Activated B cell treated with CpG ODN at 0.5 μM for 24 hours (primary cell): ENCODE measurements at regions of chr1 and their contacts with region 1.

Region 1: DNA sequence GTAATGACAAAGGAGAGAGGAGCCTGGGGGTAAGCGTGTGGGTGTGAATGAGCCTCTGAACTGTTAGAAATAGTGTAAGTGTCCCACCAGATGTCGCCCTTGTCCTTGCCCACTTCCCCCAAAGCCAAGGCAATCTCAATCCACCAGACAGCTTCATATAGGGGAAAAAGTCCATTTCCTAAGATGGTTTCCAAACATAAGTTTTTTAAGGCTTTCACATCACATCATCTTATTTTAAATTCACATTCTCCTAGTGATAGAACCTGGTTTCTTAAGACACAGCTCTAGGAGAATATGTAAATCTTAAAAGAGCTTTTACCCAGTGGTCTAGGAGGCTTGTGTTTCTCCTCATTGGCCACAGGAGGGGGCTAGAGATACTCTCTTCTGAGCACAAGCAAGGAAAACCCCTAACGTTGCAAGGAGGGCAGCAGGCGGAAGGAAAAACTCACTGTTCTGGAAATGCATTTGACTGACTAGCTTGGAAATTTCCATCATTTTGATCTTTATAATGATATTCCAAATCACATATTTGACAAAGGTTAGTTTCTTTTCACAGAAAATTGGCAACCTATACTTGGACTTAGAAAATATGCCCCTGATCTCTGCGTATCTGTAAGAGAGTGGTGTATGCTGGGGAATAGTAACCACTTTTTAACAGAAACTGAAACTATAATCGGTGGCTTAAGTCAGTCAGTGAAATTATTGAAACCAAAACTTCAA is 51.9 kb upstream of the LPAR3 start:
- DNase-seq: peak; percentile 26
- ATAC-seq: peak; percentile 93
- H3K4me3 Mint-ChIP-seq: peak overlapping the region; percentile 86
- H3K27ac Mint-ChIP-seq: peak overlapping the region; percentile 95
- H3K4me1 Mint-ChIP-seq: peaks cover 17% of the 10 kb centered on the region
- H3K27me3 Mint-ChIP-seq: no peaks in the 10 kb centered on the region
- CTCF ChIP-seq: peak; percentile 100

Region 2: DNA sequence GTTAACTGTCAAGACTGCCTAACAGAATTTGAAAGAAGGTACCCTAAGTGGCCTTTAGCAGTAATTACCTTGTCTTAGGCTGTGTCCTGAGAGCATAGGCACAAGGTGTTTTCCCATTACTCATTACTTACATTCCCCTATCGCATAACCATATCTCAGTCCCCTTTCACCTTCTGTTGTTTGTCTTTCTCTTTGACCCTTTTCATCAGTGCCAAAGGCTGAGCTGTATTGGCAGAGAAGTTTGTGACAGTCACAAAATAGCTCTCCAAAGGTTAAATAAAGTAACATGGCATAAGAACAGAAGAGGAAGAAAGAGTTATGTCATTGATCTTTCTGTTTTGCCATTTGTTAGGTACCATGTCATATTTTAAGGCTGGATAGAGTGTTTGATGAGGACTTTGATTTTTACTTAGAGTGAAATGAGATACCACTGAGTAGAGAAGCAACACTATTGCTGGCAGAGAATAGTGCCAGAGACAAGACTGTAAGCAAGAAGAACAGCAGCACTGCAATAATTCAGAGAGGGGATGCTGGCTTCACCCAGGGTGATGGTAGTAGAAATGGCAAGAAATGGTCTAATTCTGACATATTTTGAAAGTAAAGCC is 1443.8 kb before region 1 on chr1:
- CTCF ChIA-PET with region 1: no interaction called
- POLR2A ChIA-PET with region 1: no interaction called
- intact Hi-C with region 1: no loop called
- DNase-seq: no peak
- ATAC-seq: peak; percentile 74
- H3K4me3 Mint-ChIP-seq: peak overlapping the region; percentile 37
- H3K27ac Mint-ChIP-seq: peak overlapping the region; percentile 82
- H3K4me1 Mint-ChIP-seq: peaks cover 72% of the 10 kb centered on the region
- H3K27me3 Mint-ChIP-seq: no peaks in the 10 kb centered on the region
- CTCF ChIP-seq: no peak

Region 3: DNA sequence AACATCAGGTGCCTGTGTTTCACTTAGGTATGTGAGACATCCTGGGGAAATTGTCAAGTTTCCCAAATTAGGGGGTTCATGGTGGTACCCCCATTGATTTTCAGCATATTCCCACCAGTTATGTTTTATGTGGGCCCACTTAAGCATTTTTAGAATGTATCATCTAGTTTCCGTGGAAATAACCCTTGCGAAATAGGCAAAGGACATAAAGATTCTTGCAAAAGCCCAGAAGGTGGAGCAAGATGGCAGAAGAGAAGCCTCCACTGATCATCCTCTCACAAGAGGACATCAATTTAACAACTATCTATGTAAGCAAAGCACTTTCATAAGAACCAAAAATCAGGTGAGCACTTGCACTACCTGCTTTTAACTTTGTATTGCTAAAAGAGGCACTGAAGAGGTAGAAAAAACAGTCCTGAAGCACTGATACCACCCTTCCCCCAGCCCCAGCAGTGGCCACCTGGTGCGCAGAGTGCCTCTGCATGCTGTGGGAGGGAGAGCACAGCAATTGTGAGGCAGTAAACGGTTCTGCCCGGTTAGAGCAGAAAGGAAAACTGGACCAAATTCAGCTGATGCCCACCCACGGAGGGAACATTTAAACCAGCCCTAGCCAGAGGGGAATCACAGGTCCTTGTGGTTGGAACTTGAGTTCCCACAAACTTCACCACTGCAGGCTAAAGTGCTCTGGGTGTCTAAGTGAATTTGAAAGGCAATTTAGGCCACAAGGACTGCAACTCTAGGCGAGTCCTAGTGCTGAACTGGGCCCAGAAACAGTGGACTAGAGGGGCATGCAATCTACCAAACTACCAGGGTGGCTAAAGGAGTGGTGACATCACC is 28.8 kb after region 1 on chr1:
- CTCF ChIA-PET with region 1: interaction called, 16 read pairs
- POLR2A ChIA-PET with region 1: no interaction called
- intact Hi-C with region 1: loop called (anchors 1 kb)
- DNase-seq: no peak
- ATAC-seq: peak; percentile 29
- H3K4me3 Mint-ChIP-seq: no peak overlapping the region
- H3K27ac Mint-ChIP-seq: peak overlapping the region; percentile 46
- H3K4me1 Mint-ChIP-seq: peaks cover 69% of the 10 kb centered on the region
- H3K27me3 Mint-ChIP-seq: no peaks in the 10 kb centered on the region
- CTCF ChIP-seq: no peak

Region 4: DNA sequence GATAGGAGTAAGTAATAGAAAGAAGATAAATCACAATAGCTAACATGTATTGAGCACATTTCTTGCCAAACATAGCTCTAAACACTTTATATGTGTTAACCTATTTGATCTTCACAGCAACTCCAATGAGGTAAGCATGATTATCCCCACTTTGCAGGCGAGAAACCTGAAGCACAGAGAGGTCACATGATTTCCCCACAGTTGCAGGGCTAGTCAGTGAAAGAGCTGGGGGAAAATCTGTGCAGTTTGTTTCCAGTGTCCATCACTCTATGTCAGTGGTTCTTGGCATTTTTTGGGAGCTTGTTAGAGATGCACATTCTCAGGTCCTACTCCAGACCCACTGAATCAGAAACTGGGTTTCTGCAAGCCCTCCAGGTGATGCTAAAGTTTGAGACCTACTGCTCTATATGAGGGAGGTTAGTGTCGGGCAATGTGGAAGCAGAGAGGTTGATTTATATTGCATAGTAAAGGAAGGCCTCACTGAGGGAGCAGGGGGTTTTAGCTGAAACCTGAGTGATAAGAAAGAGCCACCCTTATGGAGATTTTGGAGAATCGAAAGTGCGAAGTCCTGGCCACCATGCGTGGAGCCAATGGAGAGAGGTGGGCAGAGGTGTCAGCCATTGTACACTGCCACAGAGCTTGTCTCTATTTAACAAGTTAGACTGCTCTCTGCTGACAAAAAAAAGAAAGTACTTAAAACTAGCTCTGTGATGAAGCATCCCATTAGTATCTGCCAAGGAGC is 82.5 kb after region 1 on chr1:
- CTCF ChIA-PET with region 1: interaction called, 366 read pairs
- POLR2A ChIA-PET with region 1: interaction called, 32 read pairs
- intact Hi-C with region 1: loop called (anchors 1 kb)
- DNase-seq: no peak
- ATAC-seq: peak; percentile 98
- H3K4me3 Mint-ChIP-seq: peak overlapping the region; percentile 69
- H3K27ac Mint-ChIP-seq: peak overlapping the region; percentile 85
- H3K4me1 Mint-ChIP-seq: peaks cover 8% of the 10 kb centered on the region
- H3K27me3 Mint-ChIP-seq: no peaks in the 10 kb centered on the region
- CTCF ChIP-seq: no peak

Region 5: DNA sequence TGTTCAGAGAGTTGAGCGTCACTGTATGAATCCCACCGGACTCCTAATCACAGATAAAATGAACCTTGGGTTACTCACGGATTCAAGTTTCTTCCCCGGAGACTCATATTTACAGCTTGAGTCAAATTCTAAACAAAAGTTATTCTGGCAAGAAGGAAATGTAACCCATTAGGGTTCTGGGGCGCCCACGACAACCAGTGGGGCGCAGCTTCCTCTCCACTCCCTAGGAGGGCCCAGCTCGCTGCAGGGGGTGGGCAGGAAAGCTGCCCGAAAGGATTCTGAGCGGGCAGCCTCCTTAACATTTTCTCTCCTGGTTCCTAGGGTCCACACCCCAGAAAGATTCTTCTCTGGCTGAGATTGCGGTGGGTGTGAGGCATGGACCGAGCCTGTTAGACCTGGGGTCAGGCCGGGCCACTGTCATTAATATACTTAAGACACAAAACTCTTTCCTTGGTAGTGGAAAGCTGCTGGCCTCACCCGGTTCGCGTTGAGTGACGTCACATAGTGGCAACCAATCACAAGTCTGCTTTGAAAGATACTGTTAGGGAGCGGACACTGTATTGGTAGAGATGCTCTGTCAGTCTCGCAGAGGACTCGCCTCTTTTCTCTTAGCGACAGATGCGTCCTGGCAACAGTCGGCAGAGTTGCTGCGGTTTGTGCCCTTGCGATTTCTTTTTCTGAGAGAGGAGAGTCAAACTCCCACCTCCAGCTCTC is 116.9 kb after region 1 on chr1:
- CTCF ChIA-PET with region 1: interaction called, 4 read pairs
- POLR2A ChIA-PET with region 1: interaction called, 6 read pairs
- intact Hi-C with region 1: loop called (anchors 1 kb)
- DNase-seq: peak; percentile 56
- ATAC-seq: peak; percentile 98
- H3K4me3 Mint-ChIP-seq: peak overlapping the region; percentile 92
- H3K27ac Mint-ChIP-seq: peak overlapping the region; percentile 83
- H3K4me1 Mint-ChIP-seq: peaks cover 27% of the 10 kb centered on the region
- H3K27me3 Mint-ChIP-seq: peaks cover 10% of the 10 kb centered on the region
- CTCF ChIP-seq: no peak

Region 6: DNA sequence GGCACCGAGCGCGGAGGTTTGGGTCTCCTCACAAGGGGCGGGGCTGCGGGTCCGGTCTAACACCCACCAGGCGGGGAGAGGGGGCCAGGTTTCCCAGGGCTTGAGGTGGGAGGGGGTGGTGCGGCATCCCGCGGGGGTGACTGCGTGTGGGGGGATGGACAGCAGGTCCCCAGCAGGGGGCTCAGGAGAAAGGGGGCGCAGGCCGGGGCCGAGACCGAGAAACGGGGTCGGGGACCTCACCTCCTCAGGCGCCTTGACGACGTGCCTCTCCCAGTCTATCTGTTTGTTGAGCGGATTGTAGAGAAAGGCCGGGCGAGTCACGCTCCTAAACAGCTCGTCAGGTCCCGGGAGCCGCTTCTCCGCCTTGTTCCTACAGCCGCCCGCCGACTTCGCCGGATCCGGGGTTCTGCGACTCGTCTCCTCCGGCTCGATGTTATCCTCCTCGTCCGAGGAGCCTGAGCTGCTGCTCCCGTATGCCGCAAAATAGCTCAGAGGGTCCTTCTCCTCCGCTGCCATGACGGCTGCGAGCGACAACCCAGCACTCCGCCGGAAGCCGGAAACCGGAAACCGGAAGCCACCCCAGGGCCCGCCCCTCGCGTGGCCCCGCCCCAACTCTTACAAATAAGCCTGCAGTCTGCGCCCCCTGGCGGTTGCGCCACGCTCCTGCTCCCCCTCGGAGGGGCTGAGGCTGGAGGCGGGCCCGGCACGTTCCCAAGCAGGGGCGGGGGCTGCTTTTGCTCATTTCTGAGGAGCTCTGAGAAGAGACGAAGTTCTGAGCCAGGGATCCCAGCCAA is 314.4 kb after region 1 on chr1 and contains the start of gene C1orf52:
- CTCF ChIA-PET with region 1: interaction called, 89 read pairs
- POLR2A ChIA-PET with region 1: interaction called, 35 read pairs
- intact Hi-C with region 1: loop called (anchors 1 kb)
- DNase-seq: peak; percentile 99
- ATAC-seq: peak; percentile 96
- H3K4me3 Mint-ChIP-seq: peak within 1 kb of the TSS; percentile 98
- H3K27ac Mint-ChIP-seq: peak within 1 kb of the TSS; percentile 92
- H3K4me1 Mint-ChIP-seq: peaks cover 37% of the 10 kb centered on the region
- H3K27me3 Mint-ChIP-seq: no peaks in the 10 kb centered on the region
- CTCF ChIP-seq: peak; percentile 88
- total RNA-seq, gene C1orf52: 31.4 and 32.0 TPM in 2 replicates

Region 7: DNA sequence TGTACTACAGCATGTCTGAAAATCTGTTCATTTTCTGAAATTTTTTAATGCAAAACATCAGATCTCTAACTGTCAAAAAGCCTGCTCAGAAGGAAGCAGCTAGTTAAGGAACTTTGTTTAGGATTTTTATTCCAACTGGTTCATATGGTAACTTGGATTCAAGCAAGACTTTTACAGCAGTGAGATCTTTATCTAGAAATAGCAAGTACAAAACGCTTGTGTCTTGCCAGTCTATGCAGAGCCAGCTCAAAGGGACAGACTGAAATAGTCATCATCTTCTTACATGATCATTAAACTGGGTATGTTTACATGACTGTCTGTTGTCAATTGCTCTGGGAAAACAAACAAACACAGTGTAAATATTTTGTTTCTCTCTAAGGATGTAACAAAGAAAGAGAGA is 482.4 kb after region 1 on chr1:
- CTCF ChIA-PET with region 1: no interaction called
- POLR2A ChIA-PET with region 1: no interaction called
- intact Hi-C with region 1: no loop called
- DNase-seq: no peak
- ATAC-seq: no peak
- H3K4me3 Mint-ChIP-seq: no peak overlapping the region
- H3K27ac Mint-ChIP-seq: no peak overlapping the region
- H3K4me1 Mint-ChIP-seq: peaks cover 12% of the 10 kb centered on the region
- H3K27me3 Mint-ChIP-seq: no peaks in the 10 kb centered on the region
- CTCF ChIP-seq: no peak